WTC11 (cell line): ENCODE measurements at regions of chr4 and their contacts with region 1.

Region 1: GRCh38 chr4:56387023-56388001 is at the start of gene AASDH:
- DNase-seq: peak; percentile 96
- ATAC-seq: peak; percentile 91
- H3K4me3 Mint-ChIP-seq: peak within 1 kb of the TSS; percentile 88
- H3K27ac Mint-ChIP-seq: peak within 1 kb of the TSS; percentile 100
- H3K4me1 Mint-ChIP-seq: peaks cover 25% of the 10 kb centered on the region
- H3K27me3 Mint-ChIP-seq: no peaks in the 10 kb centered on the region; the same call in 1 of the 2 replicates
- CTCF ChIP-seq: no peak
- total RNA-seq, gene AASDH: 12.6 to 15.6 TPM (median 14.6 TPM) in 3 replicates

Region 2: GRCh38 chr4:56400560-56400959 is 13.2 kb after region 1 on chr4:
- CTCF ChIA-PET with region 1: interaction called, 3 read pairs
- POLR2A ChIA-PET with region 1: interaction called, 10 read pairs
- DNase-seq: peak; percentile 31
- ATAC-seq: peak; percentile 86
- H3K4me3 Mint-ChIP-seq: peak overlapping the region; percentile 20
- H3K27ac Mint-ChIP-seq: peak overlapping the region; percentile 98
- H3K4me1 Mint-ChIP-seq: peaks cover 26% of the 10 kb centered on the region
- H3K27me3 Mint-ChIP-seq: no peaks in the 10 kb centered on the region
- CTCF ChIP-seq: no peak

Region 3: DNA sequence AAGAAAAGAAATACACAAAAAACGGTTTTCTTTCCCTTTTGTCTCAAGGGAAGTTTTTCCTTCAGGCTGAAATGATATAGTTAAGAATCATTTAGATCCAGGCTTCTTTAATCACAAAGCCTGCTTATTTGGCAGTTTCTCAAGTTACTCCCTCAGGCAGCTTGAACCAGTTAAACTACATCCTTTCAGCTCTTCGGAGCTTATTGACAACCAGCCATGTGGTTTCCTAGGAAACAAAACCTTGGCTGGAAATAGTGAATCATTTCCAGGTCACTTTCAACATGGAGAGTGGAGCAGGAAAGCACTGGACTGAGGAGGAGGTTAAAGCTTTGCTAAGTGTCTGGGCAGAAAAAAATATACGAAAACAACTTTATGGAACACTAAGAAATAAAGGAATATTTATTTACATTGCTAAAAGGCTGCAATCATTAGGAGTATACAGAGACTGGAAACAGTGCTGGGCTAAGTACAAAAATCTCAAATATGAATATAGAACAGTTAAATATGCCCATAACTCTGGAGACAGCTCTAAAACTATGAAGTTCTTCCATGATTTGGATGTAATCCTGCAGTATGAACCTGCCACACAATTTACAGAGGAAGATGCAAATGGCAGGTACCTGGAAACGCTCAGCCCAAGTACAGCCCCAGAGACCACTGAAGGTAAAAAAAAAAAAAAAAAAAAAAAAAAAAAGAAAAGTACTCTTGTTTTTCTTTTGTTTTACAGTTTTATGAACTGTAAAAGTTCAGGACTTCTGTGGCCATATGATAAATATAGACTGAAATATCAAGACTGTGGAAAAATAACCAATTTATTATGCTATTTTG is 23.1 kb after region 1 on chr4:
- CTCF ChIA-PET with region 1: interaction called, 4 read pairs
- POLR2A ChIA-PET with region 1: interaction called, 15 read pairs
- DNase-seq: no peak
- ATAC-seq: peak; percentile 86
- H3K4me3 Mint-ChIP-seq: peak overlapping the region; percentile 58
- H3K27ac Mint-ChIP-seq: peak overlapping the region; percentile 98
- H3K4me1 Mint-ChIP-seq: peaks cover 61% of the 10 kb centered on the region
- H3K27me3 Mint-ChIP-seq: no peaks in the 10 kb centered on the region
- CTCF ChIP-seq: no peak